ENCODE measurements at regions of chr14 and their contacts with region 1.

Region 1: DNA sequence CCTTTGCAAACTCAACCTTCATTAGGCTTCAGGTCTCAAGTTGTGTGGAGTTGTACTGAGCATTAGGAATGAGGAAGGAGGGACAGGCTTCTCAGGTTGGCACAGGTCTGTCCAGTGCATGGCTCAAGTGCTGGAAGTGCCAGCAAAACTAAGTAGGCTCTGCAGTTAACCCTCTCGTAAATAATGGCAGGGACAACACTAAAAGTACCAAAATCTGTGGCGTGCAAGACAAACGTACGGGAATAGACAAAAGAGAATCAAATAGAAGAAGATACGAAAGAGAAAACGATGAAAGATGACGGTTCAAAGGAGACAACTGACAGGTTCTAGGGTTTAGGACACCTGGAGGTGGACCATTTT is 612 bp downstream of the TRAPPC6B start:
- DNase-seq: peak in 1 of 14 experiments; percentile 11
- ATAC-seq: no peak
- H3K4me3 ChIP-seq: peak overlapping the region; percentile 97
- H3K4me3 Mint-ChIP-seq: peak overlapping the region; percentile 91
- H3K27ac ChIP-seq: peak overlapping the region; percentile 95 to 96
- H3K27ac Mint-ChIP-seq: peak overlapping the region; percentile 100
- H3K4me1 ChIP-seq: peaks cover 33% of the 10 kb centered on the region
- H3K4me1 Mint-ChIP-seq: peaks cover 66% of the 10 kb centered on the region
- H3K27me3 ChIP-seq: no peaks in the 10 kb centered on the region
- H3K27me3 Mint-ChIP-seq: no peaks in the 10 kb centered on the region
- CTCF ChIP-seq: no peak

Region 2: DNA sequence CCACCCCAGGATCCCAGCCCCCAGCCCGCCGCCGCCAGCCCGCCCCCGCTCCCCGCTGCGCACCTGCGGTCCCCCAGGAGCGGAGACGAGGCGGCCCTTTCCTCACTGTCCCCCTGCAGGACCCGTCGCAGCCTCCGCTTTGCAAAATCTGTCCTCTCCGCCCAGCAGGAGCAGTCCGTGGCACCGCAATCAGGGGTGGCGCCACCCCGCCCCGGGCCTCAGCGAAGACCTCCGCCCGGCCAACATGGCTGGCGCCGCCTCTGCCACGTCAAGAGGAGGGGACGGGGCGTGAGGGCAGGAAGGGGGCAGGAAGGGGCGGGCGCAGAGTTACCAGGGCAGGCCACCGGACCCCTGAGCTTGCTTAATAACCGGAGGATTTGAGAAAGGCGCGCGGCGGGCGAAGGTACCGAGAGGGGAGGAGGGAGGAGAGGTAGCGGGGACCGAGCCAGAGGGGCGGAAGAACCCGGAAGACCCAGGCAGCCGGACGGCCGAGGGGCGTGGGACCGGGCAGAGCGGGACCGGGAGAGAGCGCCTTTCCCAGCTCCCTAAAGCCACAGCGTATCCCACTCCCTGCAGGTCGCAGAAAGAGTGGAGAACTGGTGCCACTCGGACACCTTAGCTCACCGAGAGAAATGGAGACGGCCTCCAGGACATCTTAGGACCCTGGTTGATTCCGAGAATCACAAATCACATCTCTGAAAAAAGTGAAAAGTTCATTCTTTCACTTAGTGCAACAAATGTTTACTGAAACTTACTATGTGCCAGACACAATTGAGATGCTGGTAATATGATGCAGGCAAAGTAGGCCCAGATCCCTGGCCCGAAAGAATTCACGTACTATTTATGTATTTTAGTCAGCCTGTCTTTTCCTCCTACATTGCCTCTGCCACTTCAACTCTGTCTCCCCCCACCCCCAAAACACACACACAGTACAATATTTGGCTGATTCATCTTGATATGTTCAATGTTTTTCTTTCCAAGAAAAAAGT is 66.3 kb before region 1 on chr14 and contains the start of gene SEC23A:
- CTCF ChIA-PET with region 1: interaction called, 3 read pairs
- POLR2A ChIA-PET with region 1: interaction called, 28 read pairs
- intact Hi-C with region 1: loop called in 1 of 2 experiments (anchors 5 kb)
- DNase-seq: peak; percentile 62 to 91 (median 78)
- ATAC-seq: peak; percentile 95
- H3K4me3 ChIP-seq: peak within 1 kb of the TSS; percentile 100
- H3K4me3 Mint-ChIP-seq: peak within 1 kb of the TSS; percentile 98
- H3K27ac ChIP-seq: peak within 1 kb of the TSS; percentile 83 to 96
- H3K27ac Mint-ChIP-seq: peak within 1 kb of the TSS; percentile 98
- H3K4me1 ChIP-seq: peaks cover 34% of the 10 kb centered on the region
- H3K4me1 Mint-ChIP-seq: peaks cover 56% of the 10 kb centered on the region
- H3K27me3 ChIP-seq: no peaks in the 10 kb centered on the region
- H3K27me3 Mint-ChIP-seq: no peaks in the 10 kb centered on the region
- CTCF ChIP-seq: no peak
- total RNA-seq, gene SEC23A: 68.4 to 82.1 TPM

Region 3: DNA sequence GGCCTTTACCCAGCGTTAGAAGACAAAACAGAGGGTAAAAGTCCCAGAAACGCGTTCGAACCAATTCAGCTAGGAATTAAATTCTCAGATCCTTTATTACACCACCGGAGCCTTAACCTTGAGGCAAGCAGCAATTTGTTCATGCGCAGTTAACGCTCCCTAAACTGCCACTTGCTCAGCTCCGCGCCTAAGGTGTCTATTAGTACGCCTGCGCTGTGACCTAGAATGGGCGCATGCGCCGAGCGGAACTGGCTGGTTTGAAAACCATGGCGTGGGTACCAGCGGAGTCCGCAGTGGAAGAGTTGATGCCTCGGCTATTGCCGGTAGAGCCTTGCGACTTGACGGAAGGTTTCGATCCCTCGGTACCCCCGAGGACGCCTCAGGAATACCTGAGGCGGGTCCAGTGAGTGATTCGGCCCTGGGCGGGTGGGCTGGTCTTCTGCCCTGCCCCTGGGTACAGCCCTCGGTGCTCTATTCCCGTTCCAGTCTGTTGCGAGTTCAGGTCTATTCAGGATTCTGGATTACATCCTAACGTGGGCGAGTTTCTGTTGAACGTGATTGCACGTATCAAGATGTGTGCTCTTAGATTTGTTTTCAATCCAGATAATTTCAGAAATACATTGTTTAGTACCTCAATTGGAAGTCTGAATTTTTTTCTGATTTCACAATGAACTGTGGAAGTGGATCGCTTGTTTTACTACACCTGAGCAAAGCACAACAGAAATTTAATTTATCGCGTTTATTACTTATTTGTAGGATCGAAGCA is 55.3 kb before region 1 on chr14 and contains the start of gene GEMIN2:
- CTCF ChIA-PET with region 1: interaction called, 3 read pairs
- POLR2A ChIA-PET with region 1: interaction called, 19 read pairs
- intact Hi-C with region 1: loop called (anchors 2 kb)
- DNase-seq: peak; percentile 85 to 98 (median 92)
- ATAC-seq: peak; percentile 98
- H3K4me3 ChIP-seq: peak within 1 kb of the TSS; percentile 72
- H3K4me3 Mint-ChIP-seq: peak within 1 kb of the TSS; percentile 99
- H3K27ac ChIP-seq: peak within 1 kb of the TSS; percentile 55 to 65
- H3K27ac Mint-ChIP-seq: peak within 1 kb of the TSS; percentile 91
- H3K4me1 ChIP-seq: peaks cover 6% of the 10 kb centered on the region
- H3K4me1 Mint-ChIP-seq: peaks cover 17% of the 10 kb centered on the region
- H3K27me3 ChIP-seq: no peaks in the 10 kb centered on the region
- H3K27me3 Mint-ChIP-seq: no peaks in the 10 kb centered on the region
- CTCF ChIP-seq: no peak
- total RNA-seq, gene GEMIN2: 14.6 to 16.1 TPM

Region 4: GRCh38 chr14:39229222-39229543 is 59.7 kb after region 1 on chr14:
- CTCF ChIA-PET with region 1: no interaction called
- POLR2A ChIA-PET with region 1: interaction called, 13 read pairs
- intact Hi-C with region 1: loop called in 1 of 2 experiments (anchors 5 kb)
- DNase-seq: peak in 12 of 14 experiments; percentile 7 to 90 (median 34)
- ATAC-seq: peak; percentile 91
- H3K4me3 ChIP-seq: no peak overlapping the region
- H3K4me3 Mint-ChIP-seq: no peak overlapping the region
- H3K27ac ChIP-seq: peak overlapping the region; percentile 44 to 78
- H3K27ac Mint-ChIP-seq: peak overlapping the region; percentile 57
- H3K4me1 ChIP-seq: peaks cover 24% of the 10 kb centered on the region
- H3K4me1 Mint-ChIP-seq: peaks cover 35% of the 10 kb centered on the region
- H3K27me3 ChIP-seq: no peaks in the 10 kb centered on the region
- H3K27me3 Mint-ChIP-seq: no peaks in the 10 kb centered on the region
- CTCF ChIP-seq: no peak

Region 5: DNA sequence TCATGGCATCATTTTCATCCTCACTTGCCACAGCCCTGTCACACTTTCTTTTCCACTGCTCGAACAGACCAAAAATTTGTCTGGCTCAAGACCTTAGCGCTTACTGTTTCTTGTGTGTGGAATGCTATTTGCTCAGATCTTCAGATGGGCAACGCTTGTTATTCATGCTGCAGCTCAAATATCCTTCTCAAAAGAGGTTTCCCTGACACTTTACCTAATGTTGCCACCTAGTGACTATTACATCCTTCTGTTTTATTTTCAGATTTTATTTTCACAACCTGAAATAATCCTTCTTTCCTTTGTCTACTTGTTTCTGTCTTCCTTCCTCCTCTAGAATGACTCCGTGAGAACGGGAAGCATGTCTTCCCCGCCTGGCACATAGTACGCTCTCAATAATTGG is 257.1 kb after region 1 on chr14:
- CTCF ChIA-PET with region 1: no interaction called
- POLR2A ChIA-PET with region 1: interaction called, 66 read pairs
- intact Hi-C with region 1: no loop called
- DNase-seq: peak in 3 of 14 experiments; percentile 29 to 46 (median 42)
- ATAC-seq: no peak
- H3K4me3 ChIP-seq: no peak overlapping the region
- H3K4me3 Mint-ChIP-seq: peak overlapping the region; percentile 6
- H3K27ac ChIP-seq: no peak overlapping the region
- H3K27ac Mint-ChIP-seq: no peak overlapping the region
- H3K4me1 ChIP-seq: peaks cover 37% of the 10 kb centered on the region
- H3K4me1 Mint-ChIP-seq: peaks cover 87% of the 10 kb centered on the region
- H3K27me3 ChIP-seq: no peaks in the 10 kb centered on the region
- H3K27me3 Mint-ChIP-seq: no peaks in the 10 kb centered on the region
- CTCF ChIP-seq: peak; percentile 42

Region 6: DNA sequence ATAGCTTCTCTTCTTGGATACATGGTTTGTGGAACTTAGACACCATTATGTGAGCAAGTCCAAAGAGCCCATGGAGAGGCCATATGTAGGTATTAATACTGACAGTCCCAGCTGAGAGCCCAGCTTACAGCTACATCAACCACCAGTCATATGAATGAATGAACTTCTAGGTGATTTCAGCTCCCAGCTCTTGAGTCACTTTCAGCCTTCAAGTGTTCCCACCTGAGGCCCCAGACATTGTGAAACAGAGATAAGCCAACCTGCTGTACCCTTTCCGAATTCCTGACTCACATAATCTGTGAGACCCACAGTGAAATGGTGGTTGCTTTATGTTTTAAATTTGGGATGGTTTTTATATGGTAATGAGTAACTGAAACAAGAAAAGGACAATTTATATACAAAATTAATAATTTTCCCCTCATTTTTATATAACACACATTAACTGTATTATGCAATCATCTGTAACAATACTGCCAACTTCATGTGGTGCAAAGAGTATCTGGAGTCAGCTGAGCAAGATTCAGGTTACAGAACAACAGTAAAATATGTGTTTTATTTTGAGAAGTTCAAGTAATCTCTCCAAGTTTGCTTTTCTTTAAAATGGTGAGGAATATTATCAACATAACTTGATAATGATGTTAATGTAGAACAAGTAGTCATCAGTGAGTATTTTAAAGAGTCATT is 290.4 kb after region 1 on chr14:
- CTCF ChIA-PET with region 1: no interaction called
- POLR2A ChIA-PET with region 1: no interaction called
- intact Hi-C with region 1: no loop called
- DNase-seq: no peak
- ATAC-seq: no peak
- H3K4me3 ChIP-seq: no peak overlapping the region
- H3K4me3 Mint-ChIP-seq: no peak overlapping the region
- H3K27ac ChIP-seq: no peak overlapping the region
- H3K27ac Mint-ChIP-seq: no peak overlapping the region
- H3K4me1 ChIP-seq: no peaks in the 10 kb centered on the region
- H3K4me1 Mint-ChIP-seq: no peaks in the 10 kb centered on the region
- H3K27me3 ChIP-seq: no peaks in the 10 kb centered on the region
- H3K27me3 Mint-ChIP-seq: peaks cover 4% of the 10 kb centered on the region
- CTCF ChIP-seq: no peak